ENCODE measurements at regions of chr18 and their contacts with region 1.

Region 1: GRCh38 chr18:59823596-59824195 is 76.1 kb upstream of the PMAIP1 start:
- DNase-seq: peak; percentile 20
- H3K4me3 Mint-ChIP-seq: no peak overlapping the region
- H3K27ac Mint-ChIP-seq: no peak overlapping the region
- H3K4me1 Mint-ChIP-seq: no peaks in the 10 kb centered on the region
- H3K27me3 Mint-ChIP-seq: peaks cover 12% of the 10 kb centered on the region

Region 2: GRCh38 chr18:59459369-59460079 is 364.2 kb before region 1 on chr18:
- intact Hi-C with region 1: loop called (anchors 1 kb)
- DNase-seq: no peak
- H3K4me3 Mint-ChIP-seq: no peak overlapping the region
- H3K27ac Mint-ChIP-seq: no peak overlapping the region
- H3K4me1 Mint-ChIP-seq: no peaks in the 10 kb centered on the region
- H3K27me3 Mint-ChIP-seq: peaks cover 2% of the 10 kb centered on the region

Region 3: DNA sequence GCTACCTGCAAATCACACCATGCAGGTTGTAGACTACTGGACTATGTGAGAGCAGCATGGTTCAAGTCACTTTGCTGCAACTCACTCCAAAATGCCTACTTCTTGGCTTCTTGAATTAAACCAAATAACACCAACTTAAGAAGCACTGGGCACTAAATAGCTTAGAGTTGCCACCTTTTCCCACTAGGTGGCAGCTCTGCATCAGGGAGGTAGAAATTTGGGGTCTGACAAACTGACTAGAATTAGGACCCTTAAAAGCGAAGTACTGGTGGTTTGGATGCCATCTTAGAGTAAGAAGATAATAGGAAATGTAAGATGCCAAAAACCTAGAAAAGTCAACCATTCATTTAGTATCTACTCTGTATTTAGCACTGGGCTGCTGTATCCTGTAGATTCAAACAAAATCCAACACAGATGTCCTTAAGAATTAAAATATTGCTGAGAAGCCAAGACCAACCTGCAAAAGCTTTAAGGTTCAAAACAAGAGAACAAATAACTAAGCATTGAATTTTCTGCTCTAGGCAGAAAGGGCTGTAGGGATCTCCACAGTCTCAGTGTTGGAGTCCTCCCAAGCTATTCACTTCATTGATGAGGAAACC is 192.0 kb before region 1 on chr18:
- intact Hi-C with region 1: loop called (anchors 1 kb)
- DNase-seq: no peak
- H3K4me3 Mint-ChIP-seq: no peak overlapping the region
- H3K27ac Mint-ChIP-seq: no peak overlapping the region
- H3K4me1 Mint-ChIP-seq: no peaks in the 10 kb centered on the region
- H3K27me3 Mint-ChIP-seq: peaks cover 6% of the 10 kb centered on the region

Region 4: DNA sequence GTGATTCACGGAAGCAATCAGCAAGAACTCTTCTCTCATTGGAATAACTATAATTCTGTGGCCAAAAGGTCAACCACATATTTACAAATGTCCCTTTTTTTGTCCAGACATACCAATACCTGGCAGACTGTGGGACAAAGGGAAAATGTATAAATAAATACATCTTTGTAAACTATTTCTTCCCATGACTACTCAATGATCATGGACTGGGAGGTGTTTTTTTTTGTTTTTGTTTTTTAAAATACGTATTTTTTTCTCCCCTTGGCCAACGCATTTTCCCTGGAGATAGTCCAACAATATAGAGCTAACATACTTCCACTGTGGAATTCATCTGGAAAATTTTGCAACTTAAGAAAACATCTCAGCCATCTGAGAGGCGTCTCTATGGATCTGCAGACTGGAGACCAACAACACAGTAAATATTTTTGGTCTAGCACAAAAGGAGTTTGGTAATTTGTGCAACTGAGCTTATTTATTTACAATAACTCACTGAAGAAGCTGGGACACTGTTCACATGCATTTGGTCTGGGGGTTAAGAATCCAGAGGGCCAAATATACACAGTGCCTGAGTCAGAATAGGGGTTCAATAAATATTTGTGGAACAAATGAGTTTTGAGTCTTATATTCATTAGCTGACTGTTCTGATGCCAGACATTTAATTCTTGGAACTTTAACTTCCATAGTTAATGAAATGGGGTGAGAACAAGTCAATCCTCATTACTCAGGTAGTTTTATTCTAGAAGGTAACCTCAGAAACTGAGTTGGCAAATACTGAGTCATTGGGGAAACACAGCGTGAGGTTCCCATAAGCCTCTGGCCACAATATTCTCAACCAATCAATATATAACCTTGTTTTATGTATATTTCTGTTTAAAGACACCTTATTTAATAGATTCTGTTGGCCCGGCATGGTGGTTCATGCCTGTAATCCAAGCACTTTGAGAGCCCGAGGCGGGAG is 162.6 kb before region 1 on chr18:
- intact Hi-C with region 1: no loop called
- DNase-seq: no peak
- H3K4me3 Mint-ChIP-seq: no peak overlapping the region
- H3K27ac Mint-ChIP-seq: no peak overlapping the region
- H3K4me1 Mint-ChIP-seq: no peaks in the 10 kb centered on the region
- H3K27me3 Mint-ChIP-seq: peaks cover 7% of the 10 kb centered on the region

Region 5: DNA sequence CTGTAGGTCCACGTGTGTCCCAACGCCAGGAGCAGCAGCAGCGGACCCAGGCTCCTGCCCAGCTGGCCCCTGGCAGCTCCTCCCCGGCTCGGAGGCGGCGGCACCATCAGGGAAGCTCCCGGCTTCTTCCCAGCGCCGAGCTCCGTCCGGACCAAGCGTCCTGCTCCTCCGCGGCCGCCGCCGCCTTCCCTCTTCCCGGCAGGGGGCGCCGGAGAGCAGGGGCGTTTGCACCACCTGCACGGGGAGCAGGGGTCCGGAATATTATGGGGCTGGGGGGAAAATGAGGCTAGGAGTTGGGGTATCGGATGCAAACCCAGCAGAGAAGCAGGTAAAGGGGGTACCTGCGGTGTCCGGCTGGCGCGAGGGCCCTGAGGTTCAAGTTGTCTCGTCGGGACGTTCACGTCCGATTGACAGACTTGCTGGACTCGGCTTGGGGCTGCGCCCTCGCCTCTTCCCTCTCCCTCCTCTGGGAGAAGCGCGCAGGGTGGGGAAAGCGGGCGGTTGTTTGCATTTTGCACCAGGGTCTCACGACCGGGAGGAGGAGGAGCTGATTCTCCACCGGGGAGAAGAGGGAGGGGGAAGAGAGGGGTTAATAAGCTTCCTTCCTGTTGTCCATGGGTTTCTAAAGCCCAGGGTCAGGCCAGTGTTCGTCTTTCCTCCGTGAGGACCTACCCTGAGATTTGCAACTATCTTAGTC is 126.3 kb before region 1 on chr18 and contains the start of gene CCBE1:
- intact Hi-C with region 1: loop called (anchors 1 kb)
- DNase-seq: peak; percentile 22
- H3K4me3 Mint-ChIP-seq: peak within 1 kb of the TSS; percentile 23
- H3K27ac Mint-ChIP-seq: no peak within 1 kb of the TSS
- H3K4me1 Mint-ChIP-seq: peaks cover 5% of the 10 kb centered on the region
- H3K27me3 Mint-ChIP-seq: peaks cover 65% of the 10 kb centered on the region
- total RNA-seq, gene CCBE1: 0.02 TPM in 1 of 2 replicates, not detected in the other

Region 6: DNA sequence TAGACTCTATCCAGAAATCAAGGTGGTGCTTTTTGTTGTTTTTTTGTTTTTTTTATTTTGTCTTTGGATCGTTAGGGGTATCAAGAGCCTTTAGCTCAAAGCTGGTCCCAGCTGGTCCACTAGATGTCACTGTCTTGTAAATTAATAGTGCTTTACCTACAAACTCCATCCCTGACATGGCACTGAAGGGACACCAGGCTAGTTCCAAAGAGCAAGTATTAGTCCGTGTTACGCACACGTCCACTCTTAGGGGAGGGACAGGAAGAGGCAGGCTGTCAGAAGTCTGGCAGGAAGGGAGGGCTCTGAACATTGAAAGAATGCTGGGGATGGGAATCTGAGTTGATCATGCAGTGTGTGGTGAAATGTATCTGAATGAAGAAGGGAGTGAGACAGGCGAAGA is 40.6 kb before region 1 on chr18:
- intact Hi-C with region 1: loop called (anchors 1 kb)
- DNase-seq: no peak
- H3K4me3 Mint-ChIP-seq: no peak overlapping the region
- H3K27ac Mint-ChIP-seq: no peak overlapping the region
- H3K4me1 Mint-ChIP-seq: no peaks in the 10 kb centered on the region
- H3K27me3 Mint-ChIP-seq: peaks cover 3% of the 10 kb centered on the region